Aorta (tissue), 5 donors: ENCODE measurements at regions of chr10 and their contacts with region 1.

Region 1: DNA sequence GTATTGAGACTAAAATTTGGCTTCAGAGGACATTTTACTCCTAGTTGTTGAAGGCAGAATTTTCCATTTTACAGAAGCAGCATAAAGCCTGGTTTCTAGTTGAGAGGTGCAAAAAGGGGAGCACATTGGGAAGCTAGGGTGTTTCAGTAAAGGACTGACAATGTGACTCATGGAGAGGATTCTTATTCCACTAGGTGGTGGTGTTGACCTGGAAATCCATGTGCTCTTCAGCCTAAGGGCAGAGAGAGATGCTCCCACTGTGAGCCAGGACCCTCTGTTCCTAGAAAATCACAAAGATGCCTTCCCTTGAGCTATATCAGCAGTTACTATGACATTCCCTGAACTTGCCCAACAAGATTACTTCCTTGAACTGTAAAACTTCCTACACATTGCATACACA is 687.8 kb downstream of the IPMK start:
- DNase-seq: no peak
- ATAC-seq: no peak
- H3K4me3 ChIP-seq: no peak overlapping the region
- H3K27ac ChIP-seq: no peak overlapping the region
- H3K4me1 ChIP-seq: no peaks in the 10 kb centered on the region
- H3K27me3 ChIP-seq: no peaks in the 10 kb centered on the region

Region 2: DNA sequence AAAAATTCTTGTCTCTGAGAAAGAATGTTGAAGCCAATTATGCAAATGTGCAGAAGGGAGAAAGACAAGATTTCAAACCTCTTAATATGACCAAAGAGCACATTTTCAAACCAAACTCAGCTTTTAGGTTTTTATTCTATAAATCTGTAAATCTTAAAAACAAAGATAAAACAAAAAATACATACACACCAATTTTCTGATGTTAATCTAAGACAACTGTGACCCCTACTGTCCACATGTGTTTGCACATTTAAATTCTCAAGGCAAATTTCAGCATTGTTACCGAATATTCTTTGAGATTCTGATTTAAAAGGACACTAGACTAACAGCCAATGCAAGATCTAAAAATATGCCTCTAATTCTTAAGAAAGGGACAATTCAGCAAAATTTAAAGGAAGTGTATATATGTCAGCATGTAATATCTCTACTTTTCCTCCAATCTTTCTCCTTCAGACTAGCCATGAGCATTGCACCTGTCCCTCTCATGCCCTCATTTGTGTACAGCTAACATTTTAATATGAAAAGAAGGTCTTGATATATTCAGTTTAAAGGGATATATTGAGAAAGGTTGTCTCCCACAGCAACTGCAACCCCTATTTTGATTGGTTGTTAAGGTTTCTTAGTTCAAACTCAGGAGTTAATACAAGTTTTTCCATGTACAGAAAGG is 269.9 kb after region 1 on chr10:
- intact Hi-C with region 1: loop called in 1 of 2 experiments (anchors 5 kb)
- DNase-seq: no peak
- ATAC-seq: no peak
- H3K4me3 ChIP-seq: no peak overlapping the region
- H3K27ac ChIP-seq: no peak overlapping the region
- H3K4me1 ChIP-seq: no peaks in the 10 kb centered on the region
- H3K27me3 ChIP-seq: peaks cover 0 to 3% of the 10 kb centered on the region in 2 donors

Region 3: GRCh38 chr10:58064714-58065528 is 485.0 kb after region 1 on chr10:
- intact Hi-C with region 1: loop called (anchors 10 kb)
- DNase-seq: no peak
- ATAC-seq: no peak
- H3K4me3 ChIP-seq: no peak overlapping the region
- H3K27ac ChIP-seq: no peak overlapping the region
- H3K4me1 ChIP-seq: no peaks in the 10 kb centered on the region
- H3K27me3 ChIP-seq: no peaks in the 10 kb centered on the region

Region 4: DNA sequence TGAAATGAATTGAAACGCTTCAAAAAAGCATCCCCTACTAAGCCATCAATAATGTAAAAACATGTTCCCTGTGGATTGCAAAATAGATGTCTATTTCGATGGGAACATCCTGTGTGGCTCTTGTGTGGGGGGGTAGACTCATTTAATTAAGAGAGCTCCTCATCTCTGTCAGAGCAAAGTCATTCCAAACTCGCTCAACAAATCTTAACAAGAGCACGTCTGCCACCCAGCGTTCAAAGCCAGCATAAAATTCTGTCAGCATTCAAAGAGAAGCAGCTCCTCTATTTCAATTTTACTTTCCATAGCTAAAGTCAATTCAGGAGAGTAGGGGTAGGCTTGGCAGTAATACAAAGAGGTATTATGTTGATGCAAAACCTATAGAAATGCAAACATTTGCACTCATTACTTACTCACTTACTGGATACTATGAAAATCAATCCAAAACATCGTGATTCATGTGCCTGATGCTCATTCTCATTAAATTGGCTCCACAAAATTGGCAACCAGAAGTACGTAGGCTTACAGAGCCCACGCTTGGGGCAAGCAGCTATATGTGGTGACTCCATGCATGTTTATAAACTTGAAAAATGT is 572.8 kb after region 1 on chr10:
- intact Hi-C with region 1: loop called in 1 of 2 experiments (anchors 2 kb)
- DNase-seq: peak in 1 of 2 donors; percentile 55
- ATAC-seq: no peak
- H3K4me3 ChIP-seq: no peak overlapping the region
- H3K27ac ChIP-seq: no peak overlapping the region
- H3K4me1 ChIP-seq: no peaks in the 10 kb centered on the region
- H3K27me3 ChIP-seq: no peaks in the 10 kb centered on the region